A673 (cell line): ENCODE measurements at regions of chrX and their contacts with region 1.

Region 1: GRCh38 chrX:154123241-154124219 is 20.5 kb upstream of the OPN1LW start:
- DNase-seq: no peak
- H3K4me3 ChIP-seq: no peak overlapping the region
- H3K27ac ChIP-seq: no peak overlapping the region
- H3K4me1 ChIP-seq: no peaks in the 10 kb centered on the region
- H3K27me3 ChIP-seq: no peaks in the 10 kb centered on the region
- CTCF ChIP-seq: no peak

Region 2: DNA sequence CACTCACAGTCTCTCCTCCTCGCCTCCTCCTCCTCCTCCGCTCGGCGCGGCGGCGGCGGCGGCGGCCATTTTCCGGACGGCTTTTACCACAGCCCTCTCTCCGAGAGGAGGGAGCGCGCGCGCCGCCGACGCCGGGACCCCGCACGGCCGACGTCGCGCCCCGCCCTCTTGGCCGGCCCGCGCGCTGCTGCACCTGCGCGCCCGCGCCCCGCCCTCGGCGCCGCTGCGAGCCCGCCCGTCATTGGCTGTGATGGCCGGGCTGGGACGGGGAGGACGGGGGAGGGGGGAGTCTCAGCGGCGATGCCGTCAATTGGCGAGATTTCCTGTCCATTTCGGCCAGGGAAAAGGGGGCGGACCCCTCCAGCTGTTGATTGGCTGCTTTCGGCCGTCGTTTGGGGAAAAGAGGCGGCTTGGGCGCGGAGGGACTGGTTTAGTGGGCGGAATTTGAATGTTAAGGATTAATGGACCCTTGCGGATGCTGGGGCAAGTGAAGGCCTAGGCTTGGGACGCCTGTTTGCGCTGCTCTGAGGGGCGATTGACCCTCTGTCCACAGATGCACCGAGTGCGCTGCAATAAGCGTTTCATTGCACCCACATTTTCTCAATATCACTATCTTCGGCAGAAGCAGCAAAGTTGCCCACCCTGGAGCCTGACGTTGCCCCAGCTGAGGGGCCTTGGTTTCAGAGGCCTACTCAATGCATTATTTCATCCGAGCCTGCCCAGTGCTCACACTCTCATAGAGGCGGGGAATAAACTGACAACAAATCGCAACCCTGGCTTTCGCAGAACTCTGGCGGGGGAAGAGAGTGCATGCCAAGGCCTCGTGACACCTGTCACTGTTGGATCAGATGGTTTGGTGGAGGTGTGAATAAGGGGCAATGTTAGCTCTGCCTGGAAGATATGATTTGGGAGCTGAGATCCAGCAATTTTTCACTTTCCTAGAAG is 25.7 kb before region 1 on chrX and contains the start of gene MECP2:
- CTCF ChIA-PET with region 1: interaction called, 13 read pairs
- POLR2A ChIA-PET with region 1: no interaction called
- intact Hi-C with region 1: no loop called
- DNase-seq: peak; percentile 94
- H3K4me3 ChIP-seq: peak within 1 kb of the TSS; percentile 58
- H3K27ac ChIP-seq: peak within 1 kb of the TSS; percentile 79
- H3K4me1 ChIP-seq: peaks cover 5% of the 10 kb centered on the region
- H3K27me3 ChIP-seq: peaks cover 7% of the 10 kb centered on the region
- CTCF ChIP-seq: no peak
- total RNA-seq, gene MECP2: 51.9 and 52.8 TPM in 2 replicates